Testis (tissue), 5 donors: ENCODE measurements at regions of chr16 and their contacts with region 1.

Region 1: GRCh38 chr16:46857368-46857945 is 26.5 kb upstream of the C16orf87 start:
- DNase-seq: peak; percentile 23
- H3K4me3 ChIP-seq: no peak overlapping the region
- H3K27ac ChIP-seq: no peak overlapping the region
- H3K4me1 ChIP-seq: no peaks in the 10 kb centered on the region
- H3K27me3 ChIP-seq: no peaks in the 10 kb centered on the region
- CTCF ChIP-seq: peak in 1 of 3 experiments; percentile 47
- POLR2A ChIP-seq: no peak

Region 2: GRCh38 chr16:46908540-46909372 is 51.3 kb after region 1 on chr16:
- intact Hi-C with region 1: loop called (anchors 5 kb)
- DNase-seq: peak; percentile 75
- H3K4me3 ChIP-seq: no peak overlapping the region
- H3K27ac ChIP-seq: peak overlapping the region in 1 of 2 donors; percentile 13
- H3K4me1 ChIP-seq: peaks cover 22% of the 10 kb centered on the region
- H3K27me3 ChIP-seq: no peaks in the 10 kb centered on the region
- CTCF ChIP-seq: peak; percentile 70 to 98 (median 75)
- POLR2A ChIP-seq: no peak